ENCODE measurements at regions of chr16 and their contacts with region 1.

Region 1: DNA sequence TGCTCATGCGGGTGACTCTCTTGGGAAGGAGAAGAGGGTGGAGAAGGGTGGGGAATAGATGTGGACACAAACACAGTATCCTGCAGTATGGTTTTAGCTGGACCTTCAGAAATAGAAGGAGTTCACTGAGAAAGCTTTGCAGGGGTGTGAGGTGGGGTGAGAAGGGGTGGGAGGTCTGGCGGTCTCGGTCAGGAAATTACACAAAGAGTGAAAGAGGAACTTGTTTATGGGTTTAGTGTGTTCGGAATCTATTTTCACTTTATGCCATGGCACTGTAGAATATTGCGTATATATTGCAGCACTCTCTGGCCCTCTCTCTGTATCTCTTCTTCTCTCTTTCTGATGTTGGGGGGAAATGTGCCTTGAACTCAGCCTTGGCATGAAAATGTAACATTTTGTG is 148.2 kb upstream of the GOT2 start:
- DNase-seq: peak; percentile 31
- ATAC-seq: peak; percentile 96
- H3K4me3 ChIP-seq: no peak overlapping the region
- H3K27ac ChIP-seq: no peak overlapping the region
- H3K4me1 ChIP-seq: peaks cover 5% of the 10 kb centered on the region; the same call in 1 of the 2 replicates
- H3K27me3 ChIP-seq: no peaks in the 10 kb centered on the region
- CTCF ChIP-seq: no peak
- EP300 ChIP-seq: peak in 1 of 2 experiments; percentile 69; a peak in 1 of 4 replicates
- POLR2A ChIP-seq: no peak
- RAD21 ChIP-seq: no peak

Region 2: GRCh38 chr16:58859958-58860669 is 22.2 kb before region 1 on chr16:
- CTCF ChIA-PET with region 1: interaction called, 44 read pairs
- POLR2A ChIA-PET with region 1: interaction called, 10 read pairs
- RAD21 ChIA-PET with region 1: interaction called, 76 read pairs
- SMC1A ChIA-PET with region 1: interaction called, 124 read pairs
- in situ Hi-C with region 1: no loop called
- intact Hi-C with region 1: no loop called
- DNase-seq: no peak
- ATAC-seq: no peak
- H3K4me3 ChIP-seq: no peak overlapping the region
- H3K27ac ChIP-seq: no peak overlapping the region
- H3K4me1 ChIP-seq: no peaks in the 10 kb centered on the region
- H3K27me3 ChIP-seq: no peaks in the 10 kb centered on the region
- CTCF ChIP-seq: no peak
- EP300 ChIP-seq: no peak
- POLR2A ChIP-seq: no peak
- RAD21 ChIP-seq: no peak

Region 3: GRCh38 chr16:58923094-58923493 is 40.8 kb after region 1 on chr16:
- CTCF ChIA-PET with region 1: no interaction called
- POLR2A ChIA-PET with region 1: no interaction called
- RAD21 ChIA-PET with region 1: no interaction called
- SMC1A ChIA-PET with region 1: no interaction called
- in situ Hi-C with region 1: no loop called
- intact Hi-C with region 1: no loop called
- DNase-seq: no peak
- ATAC-seq: no peak
- H3K4me3 ChIP-seq: no peak overlapping the region
- H3K27ac ChIP-seq: no peak overlapping the region
- H3K4me1 ChIP-seq: no peaks in the 10 kb centered on the region
- H3K27me3 ChIP-seq: no peaks in the 10 kb centered on the region
- CTCF ChIP-seq: no peak
- EP300 ChIP-seq: no peak
- POLR2A ChIP-seq: no peak
- RAD21 ChIP-seq: no peak

Region 4: DNA sequence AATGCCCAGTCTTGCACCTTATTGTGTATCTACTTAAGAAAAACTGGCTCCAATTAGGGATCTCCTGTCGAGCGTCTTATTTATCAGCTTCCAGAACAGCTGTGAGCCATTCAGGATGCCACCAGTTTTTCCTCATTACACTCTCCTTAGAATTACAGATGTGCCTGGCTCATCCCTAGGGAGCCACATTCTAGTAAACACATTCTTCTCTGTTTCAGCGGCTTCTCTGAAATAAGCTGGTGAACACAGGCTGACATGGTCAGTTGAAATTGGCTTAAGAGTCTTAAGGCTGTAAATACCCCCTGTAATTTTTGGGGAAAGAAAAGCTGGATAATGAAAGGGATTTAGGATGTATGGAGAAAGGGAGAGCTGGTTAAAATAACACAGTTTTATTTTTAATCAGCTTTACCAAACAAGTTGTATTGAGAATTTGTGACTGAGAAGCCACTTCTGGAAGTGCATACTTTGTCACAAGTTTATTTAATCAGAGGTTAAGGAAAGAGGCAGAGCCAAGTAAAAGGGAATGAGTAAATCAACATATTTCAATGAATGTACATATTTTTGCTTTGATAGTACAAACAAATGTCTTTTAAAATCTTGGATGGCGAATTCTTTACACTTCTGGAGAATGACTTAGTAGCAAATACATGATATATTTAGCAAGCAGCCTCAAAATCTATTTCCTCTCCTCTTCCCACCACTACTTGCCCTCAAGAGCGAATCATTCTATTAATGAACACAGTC is 413.9 kb after region 1 on chr16:
- CTCF ChIA-PET with region 1: no interaction called
- POLR2A ChIA-PET with region 1: no interaction called
- RAD21 ChIA-PET with region 1: no interaction called
- SMC1A ChIA-PET with region 1: no interaction called
- in situ Hi-C with region 1: no loop called
- intact Hi-C with region 1: no loop called
- DNase-seq: no peak
- ATAC-seq: no peak
- H3K4me3 ChIP-seq: no peak overlapping the region
- H3K27ac ChIP-seq: no peak overlapping the region
- H3K4me1 ChIP-seq: no peaks in the 10 kb centered on the region
- H3K27me3 ChIP-seq: no peaks in the 10 kb centered on the region
- CTCF ChIP-seq: no peak
- EP300 ChIP-seq: no peak
- POLR2A ChIP-seq: no peak
- RAD21 ChIP-seq: no peak